ENCODE measurements at regions of chrX and their contacts with region 1.

Region 1: GRCh38 chrX:49618574-49618973 is 19.8 kb downstream of the GAGE1 start:
- DNase-seq: no peak

Region 2: DNA sequence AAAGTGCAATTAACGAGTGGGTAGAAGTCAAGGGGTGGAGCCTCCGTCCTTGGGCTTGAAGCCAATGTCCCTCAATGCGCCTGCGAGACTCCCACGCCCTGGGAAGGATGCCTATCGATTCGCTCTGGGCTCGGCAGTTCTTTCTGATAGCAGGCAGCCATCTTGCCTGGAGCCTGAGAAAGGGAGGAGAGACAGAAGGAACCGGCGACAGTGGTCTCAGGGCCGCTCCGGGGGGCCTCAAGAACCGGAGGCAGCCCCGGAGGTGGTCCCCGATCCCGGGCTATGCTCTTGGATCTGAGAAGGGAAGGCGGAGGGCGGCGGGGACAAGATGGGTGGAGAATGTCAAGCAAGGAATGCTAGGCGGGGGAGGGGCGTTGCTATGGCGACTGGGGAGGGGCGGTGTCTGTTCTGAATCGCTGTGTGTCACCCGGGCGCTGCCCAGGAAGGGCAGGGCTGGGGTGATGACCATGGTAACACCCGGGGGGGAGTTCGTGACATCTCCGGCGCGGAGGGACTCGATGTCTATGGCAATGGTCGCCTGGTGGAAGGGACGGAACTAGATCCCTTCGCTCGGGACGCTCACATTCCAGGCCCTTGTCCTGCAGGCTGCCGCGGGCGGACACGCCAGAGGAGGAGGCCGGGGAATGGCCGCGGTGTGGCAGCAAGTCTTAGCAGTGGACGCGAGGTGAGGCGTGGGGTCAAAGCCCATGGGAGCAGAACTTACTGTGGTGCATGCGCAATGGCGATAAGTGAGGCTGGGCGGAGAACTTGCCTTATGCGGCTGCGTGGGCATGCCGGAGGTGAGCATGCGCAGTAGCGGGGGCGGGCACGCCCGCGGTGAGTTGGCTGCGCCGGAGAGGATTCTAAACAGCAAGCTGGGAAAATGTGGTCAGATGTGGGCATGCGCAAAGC is 1021.0 kb before region 1 on chrX and contains the start of gene WDR13:
- intact Hi-C with region 1: no loop called
- DNase-seq: peak; percentile 97
- total RNA-seq, gene WDR13: 83.5 to 87.4 TPM

Region 3: DNA sequence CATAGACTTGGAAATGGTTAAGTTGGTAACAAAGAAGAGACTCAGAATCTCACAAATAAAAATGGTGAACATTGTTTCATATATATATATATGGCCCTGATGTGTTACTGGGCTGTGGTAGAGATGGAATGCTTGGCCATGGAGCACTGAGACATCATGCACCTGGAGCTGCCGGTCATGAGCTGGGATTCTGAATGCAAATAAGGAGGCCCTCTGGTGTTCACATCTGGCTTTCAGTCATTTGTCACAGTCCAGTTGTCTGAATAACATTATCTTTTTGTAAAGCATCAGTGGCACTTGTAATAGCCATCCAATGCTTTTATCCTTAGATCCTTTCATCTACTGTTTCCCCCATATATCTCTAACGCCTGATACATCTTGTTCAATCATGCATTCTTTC is 19.1 kb after region 1 on chrX:
- intact Hi-C with region 1: loop called in 1 of 2 experiments (anchors 1 kb)
- DNase-seq: no peak

Region 4: GRCh38 chrX:49809891-49810632 is 191.5 kb after region 1 on chrX:
- intact Hi-C with region 1: no loop called
- DNase-seq: no peak